Psoas muscle (tissue), 8 donors: ENCODE measurements at regions of chr6 and their contacts with region 1.

Region 1: DNA sequence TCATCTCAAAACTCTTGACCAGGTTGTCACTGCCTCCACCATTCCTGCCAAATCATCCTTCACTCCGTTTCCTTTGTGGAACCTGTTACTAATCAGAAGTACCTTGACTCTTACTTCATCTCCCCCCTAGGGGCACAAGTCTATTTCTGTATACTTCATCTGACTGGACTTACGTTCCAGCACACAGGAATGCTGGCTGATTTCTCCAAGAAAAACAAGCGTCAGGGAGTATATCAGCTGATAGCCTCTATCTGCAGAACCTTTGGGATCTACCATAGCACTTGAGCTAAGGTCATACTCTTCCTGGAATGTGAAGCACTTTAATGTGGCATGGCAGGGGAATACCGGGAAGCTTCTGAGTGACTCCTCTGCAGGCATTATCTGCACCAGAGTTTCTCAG is 178.1 kb upstream of the MOCS1 start:
- DNase-seq: no peak
- ATAC-seq: no peak
- H3K4me3 ChIP-seq: no peak overlapping the region
- H3K27ac ChIP-seq: no peak overlapping the region
- H3K4me1 ChIP-seq: no peaks in the 10 kb centered on the region
- H3K27me3 ChIP-seq: peaks cover 0 to 2% (median 2%) of the 10 kb centered on the region in 3 donors
- CTCF ChIP-seq: no peak

Region 2: GRCh38 chr6:40171295-40171694 is 58.9 kb after region 1 on chr6:
- intact Hi-C with region 1: loop called in 1 of 2 experiments (anchors 2 kb)
- DNase-seq: no peak
- ATAC-seq: no peak
- H3K4me3 ChIP-seq: no peak overlapping the region
- H3K27ac ChIP-seq: no peak overlapping the region
- H3K4me1 ChIP-seq: no peaks in the 10 kb centered on the region
- H3K27me3 ChIP-seq: peaks cover 0 to 7% (median 0%) of the 10 kb centered on the region in 3 donors
- CTCF ChIP-seq: no peak

Region 3: DNA sequence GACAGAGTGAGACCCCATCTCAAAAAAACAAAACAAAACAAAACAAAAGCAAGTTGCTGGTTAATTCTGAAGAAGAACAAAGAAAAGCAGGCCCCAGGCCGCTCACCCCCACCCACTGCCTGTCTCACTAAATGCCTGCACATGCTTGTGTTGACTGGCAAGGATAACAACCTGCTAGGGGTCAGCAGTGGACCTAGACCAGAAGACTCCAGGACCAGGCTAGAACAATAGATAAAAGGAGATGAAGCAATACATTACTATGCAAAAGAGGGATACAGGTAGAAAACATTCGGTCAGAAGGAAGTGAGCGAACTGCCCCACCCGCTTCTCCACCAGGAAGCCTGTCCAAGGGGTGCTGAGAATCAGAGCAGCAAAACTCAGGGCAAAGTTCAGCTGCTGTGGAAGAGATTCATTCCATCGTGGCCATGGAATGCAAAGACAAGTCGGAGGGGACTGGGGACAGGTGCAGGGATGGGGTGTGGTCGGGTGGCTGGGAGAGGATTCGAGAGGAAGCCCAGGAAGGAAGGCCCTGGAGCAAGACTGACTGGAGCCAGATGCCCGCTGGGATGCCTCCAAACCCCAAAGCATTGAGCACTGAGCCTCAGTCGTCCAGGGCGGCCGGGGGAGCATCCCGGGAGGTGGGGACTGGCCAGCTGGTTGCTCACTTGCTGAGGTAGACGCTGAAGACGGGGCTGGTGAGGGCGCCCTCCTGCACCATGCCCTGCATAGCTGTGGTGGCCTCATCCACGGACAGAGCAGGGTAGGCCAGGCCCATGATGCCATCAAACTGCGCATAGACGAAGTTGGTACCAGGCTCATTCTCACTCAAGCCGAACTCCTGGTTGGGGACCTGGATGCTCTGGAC is 1629.5 kb after region 1 on chr6:
- intact Hi-C with region 1: loop called in 1 of 2 experiments (anchors 10 kb)
- DNase-seq: peak in 1 of 2 donors; percentile 16
- ATAC-seq: peak in 1 of 4 donors; percentile 17
- H3K4me3 ChIP-seq: no peak overlapping the region
- H3K27ac ChIP-seq: no peak overlapping the region
- H3K4me1 ChIP-seq: no peaks in the 10 kb centered on the region
- H3K27me3 ChIP-seq: no peaks in the 10 kb centered on the region
- CTCF ChIP-seq: no peak